ENCODE measurements at regions of chr17 and their contacts with region 1.

Region 1: DNA sequence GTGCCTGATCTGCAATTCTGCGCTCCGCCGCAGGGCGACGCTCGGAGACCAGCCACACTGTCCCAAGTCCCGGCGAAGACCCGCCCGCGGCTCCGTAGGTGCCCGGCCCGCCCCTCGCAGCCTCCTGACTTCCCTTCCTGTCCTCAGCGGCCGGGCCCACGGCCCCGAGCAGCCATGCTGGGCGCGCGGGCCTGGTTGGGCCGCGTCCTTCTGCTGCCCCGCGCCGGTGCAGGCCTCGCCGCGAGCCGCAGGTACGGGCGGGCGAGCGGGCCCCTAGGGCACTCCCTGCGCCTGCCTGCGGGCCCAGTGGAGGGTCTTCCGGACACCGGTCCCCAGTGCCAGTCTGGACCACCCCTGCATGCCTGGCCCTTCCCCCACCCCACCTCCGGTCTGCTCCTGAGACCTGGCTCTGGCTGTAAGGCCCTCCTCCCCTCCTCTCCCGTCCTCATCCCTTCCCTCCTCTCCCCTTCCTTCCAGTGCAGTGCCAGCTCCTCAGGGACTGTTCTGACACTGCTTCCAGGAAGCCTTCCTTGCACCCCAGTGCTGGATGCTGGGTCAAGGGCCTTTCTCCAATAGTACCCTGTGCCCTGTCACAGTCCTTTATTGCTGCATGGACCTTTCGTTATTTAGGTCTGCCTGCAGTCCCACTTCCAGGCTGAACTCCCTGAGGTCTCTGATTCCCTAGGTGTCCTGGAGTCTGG is at the start of gene SPATA20:
- DNase-seq: peak; percentile 33
- H3K4me3 ChIP-seq: peak within 1 kb of the TSS; percentile 72
- CTCF ChIP-seq: peak; percentile 94

Region 2: GRCh38 chr17:50589095-50589705 is 42.0 kb after region 1 on chr17:
- CTCF ChIA-PET with region 1: interaction called, 12 read pairs
- POLR2A ChIA-PET with region 1: no interaction called
- DNase-seq: no peak
- H3K4me3 ChIP-seq: no peak overlapping the region
- CTCF ChIP-seq: no peak

Region 3: GRCh38 chr17:50626037-50626574 is 78.9 kb after region 1 on chr17:
- CTCF ChIA-PET with region 1: interaction called, 231 read pairs
- POLR2A ChIA-PET with region 1: interaction called, 3 read pairs
- DNase-seq: no peak
- H3K4me3 ChIP-seq: no peak overlapping the region
- CTCF ChIP-seq: peak; percentile 92

Region 4: DNA sequence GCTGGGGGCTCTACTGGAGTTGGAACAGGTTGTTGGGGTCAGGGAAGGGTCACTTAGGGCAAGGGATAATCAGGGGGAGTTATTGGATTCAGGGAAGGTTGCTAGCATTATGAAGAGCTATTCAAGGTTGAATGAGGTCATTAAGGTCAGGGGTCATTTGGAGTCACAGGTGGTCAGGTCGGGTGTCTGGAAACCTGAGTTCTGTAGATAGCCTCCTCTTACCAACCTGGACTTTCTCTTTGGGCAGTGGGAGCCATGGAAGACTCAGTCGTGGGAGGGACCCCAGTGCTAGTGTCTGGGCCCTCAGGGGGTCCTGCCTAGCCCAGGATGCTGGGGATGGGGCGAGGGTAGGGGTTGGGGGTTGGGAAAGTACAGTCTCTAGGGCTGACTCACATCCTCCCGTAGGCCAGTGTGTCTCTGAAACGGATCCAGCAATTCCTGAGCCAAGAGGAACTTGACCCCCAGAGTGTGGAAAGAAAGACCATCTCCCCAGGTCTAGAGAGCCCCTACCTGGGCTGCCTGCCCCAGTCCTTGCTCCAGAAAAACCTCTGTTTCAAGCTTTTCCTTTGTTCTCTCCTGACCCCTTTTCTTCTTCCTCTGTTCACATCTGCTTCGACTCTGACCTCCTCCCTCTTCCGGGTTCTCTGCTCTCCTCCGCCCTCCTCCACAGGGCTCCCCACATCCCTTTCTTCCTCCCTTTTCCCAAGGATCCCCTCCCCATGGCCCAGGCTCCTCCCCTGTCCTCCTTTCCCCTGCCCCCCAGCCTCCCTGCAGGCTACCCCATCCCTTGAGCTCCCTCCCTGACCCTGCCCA is 121.0 kb after region 1 on chr17:
- CTCF ChIA-PET with region 1: interaction called, 14 read pairs
- POLR2A ChIA-PET with region 1: no interaction called
- DNase-seq: no peak
- H3K4me3 ChIP-seq: peak overlapping the region; percentile 3
- CTCF ChIP-seq: no peak

Region 5: DNA sequence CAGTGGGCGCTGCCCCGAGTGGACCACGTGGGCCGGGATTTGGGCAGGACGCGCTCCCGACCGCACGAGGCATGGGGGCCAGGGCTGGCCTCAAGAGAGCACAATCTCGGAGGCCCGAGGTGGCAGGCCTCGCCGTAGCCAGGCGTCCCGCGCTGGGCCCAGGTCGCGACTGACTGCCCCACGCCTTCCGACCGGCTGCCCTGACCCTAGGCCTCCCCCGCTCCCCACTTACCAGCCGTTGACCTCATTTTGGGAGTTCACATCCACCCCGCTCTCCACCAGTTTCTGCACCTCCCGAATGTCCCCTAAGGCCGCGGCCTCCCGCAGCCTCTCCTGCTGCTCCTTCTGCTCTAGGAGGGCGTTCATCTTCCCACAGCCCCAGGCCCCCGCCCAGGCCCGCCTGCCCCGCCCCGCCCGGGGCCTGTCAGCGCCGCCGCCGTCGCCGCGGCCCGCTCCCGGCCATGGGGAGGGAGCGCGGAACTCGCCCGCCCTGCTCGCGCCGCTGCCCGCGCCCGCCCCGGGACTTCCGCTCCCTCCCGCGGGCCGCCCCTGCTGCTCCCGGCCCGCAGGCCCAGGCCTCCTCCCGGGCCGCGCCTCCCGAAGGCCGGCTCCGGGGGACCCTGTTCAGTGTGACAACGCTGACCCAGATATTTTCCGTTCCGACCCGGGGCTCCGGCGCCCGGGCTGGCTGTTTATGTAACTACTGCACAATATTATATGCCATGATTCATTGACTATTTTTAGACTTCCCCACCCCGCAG is 160.3 kb after region 1 on chr17 and contains the start of gene ANKRD40:
- CTCF ChIA-PET with region 1: interaction called, 26 read pairs
- POLR2A ChIA-PET with region 1: interaction called, 3 read pairs
- DNase-seq: peak; percentile 70
- H3K4me3 ChIP-seq: peak within 1 kb of the TSS; percentile 88
- CTCF ChIP-seq: no peak

Region 6: DNA sequence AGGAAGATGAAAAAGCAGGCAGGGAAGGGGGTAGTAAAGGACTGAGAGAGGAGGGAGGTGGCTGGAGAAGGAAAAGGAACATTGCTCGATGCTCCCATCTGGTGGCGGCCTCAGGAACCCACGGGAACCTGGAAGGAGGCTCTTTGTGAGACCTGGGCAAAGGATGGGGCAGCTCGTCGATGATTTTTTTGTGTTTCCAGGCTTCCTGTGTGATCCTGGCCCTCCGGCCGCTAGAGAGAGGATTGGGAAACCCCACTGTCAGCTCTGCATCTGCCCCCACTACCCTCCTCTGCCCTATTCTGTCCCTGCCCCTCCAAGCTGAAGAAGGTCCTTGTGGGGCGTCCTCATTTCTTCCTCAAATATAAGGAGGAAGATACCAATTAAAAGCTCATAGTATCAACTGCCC is 294.8 kb after region 1 on chr17:
- CTCF ChIA-PET with region 1: interaction called, 39 read pairs
- POLR2A ChIA-PET with region 1: no interaction called
- DNase-seq: no peak
- H3K4me3 ChIP-seq: no peak overlapping the region
- CTCF ChIP-seq: peak; percentile 91